MCF 10A (cell line): ENCODE measurements at regions of chr16 and their contacts with region 1.

Region 1: GRCh38 chr16:10731790-10732189 is 11.9 kb upstream of the NUBP1 start:
- DNase-seq: no peak
- H3K4me3 Mint-ChIP-seq: no peak overlapping the region
- H3K27ac Mint-ChIP-seq: no peak overlapping the region
- H3K4me1 Mint-ChIP-seq: no peaks in the 10 kb centered on the region
- H3K27me3 Mint-ChIP-seq: no peaks in the 10 kb centered on the region
- CTCF ChIP-seq: no peak

Region 2: GRCh38 chr16:10521681-10522274 is 210.0 kb before region 1 on chr16:
- CTCF ChIA-PET with region 1: interaction called, 179 read pairs
- POLR2A ChIA-PET with region 1: no interaction called
- intact Hi-C with region 1: no loop called
- DNase-seq: peak; percentile 79
- H3K4me3 Mint-ChIP-seq: no peak overlapping the region
- H3K27ac Mint-ChIP-seq: no peak overlapping the region
- H3K4me1 Mint-ChIP-seq: no peaks in the 10 kb centered on the region
- H3K27me3 Mint-ChIP-seq: no peaks in the 10 kb centered on the region
- CTCF ChIP-seq: peak; percentile 56

Region 3: DNA sequence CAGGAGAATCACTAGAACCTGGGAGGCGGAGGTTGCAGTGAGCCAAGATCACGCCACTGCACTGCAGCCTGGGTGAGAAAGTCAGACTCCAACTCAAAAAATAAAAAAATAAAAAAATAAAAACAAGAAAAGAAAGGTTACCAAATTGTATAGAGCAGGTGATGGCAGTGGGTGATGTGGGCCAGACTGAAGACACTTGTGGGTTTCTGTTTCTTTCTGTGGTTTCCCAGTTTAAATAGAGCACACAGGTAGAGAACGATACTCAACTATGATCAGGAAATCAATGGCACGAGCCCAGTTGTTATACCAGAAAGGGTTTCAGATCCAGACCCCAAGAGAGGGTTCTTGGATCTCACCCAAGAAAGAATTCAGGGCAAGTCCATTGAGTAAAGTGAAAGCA is 44.5 kb after region 1 on chr16:
- CTCF ChIA-PET with region 1: no interaction called
- POLR2A ChIA-PET with region 1: no interaction called
- intact Hi-C with region 1: no loop called
- DNase-seq: no peak
- H3K4me3 Mint-ChIP-seq: no peak overlapping the region
- H3K27ac Mint-ChIP-seq: no peak overlapping the region
- H3K4me1 Mint-ChIP-seq: peaks cover 4% of the 10 kb centered on the region
- H3K27me3 Mint-ChIP-seq: peaks cover 20% of the 10 kb centered on the region
- CTCF ChIP-seq: no peak

Region 4: DNA sequence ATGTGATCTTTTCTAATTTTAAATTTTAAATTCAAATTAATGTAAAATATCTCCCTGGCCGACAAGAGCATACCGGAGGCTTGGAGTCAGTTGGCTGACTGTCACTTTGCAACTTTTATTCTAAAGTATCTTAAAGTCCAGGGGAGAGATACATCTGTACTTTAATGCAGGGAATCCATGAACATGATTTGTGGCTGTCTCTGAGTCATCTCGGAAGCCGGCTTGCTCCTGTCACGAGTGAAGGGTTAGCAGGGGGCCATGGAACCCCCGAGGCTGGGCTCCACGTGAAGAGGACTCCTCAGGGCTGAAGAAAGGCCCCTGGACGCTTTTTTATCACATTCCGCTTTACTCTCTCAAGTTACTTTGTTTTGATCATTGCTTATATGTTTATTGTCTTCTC is 73.5 kb after region 1 on chr16:
- CTCF ChIA-PET with region 1: no interaction called
- POLR2A ChIA-PET with region 1: no interaction called
- intact Hi-C with region 1: no loop called
- DNase-seq: no peak
- H3K4me3 Mint-ChIP-seq: no peak overlapping the region
- H3K27ac Mint-ChIP-seq: no peak overlapping the region
- H3K4me1 Mint-ChIP-seq: no peaks in the 10 kb centered on the region
- H3K27me3 Mint-ChIP-seq: no peaks in the 10 kb centered on the region
- CTCF ChIP-seq: no peak